HCT116 (cell line): ENCODE measurements at regions of chr9 and their contacts with region 1.

Region 1: DNA sequence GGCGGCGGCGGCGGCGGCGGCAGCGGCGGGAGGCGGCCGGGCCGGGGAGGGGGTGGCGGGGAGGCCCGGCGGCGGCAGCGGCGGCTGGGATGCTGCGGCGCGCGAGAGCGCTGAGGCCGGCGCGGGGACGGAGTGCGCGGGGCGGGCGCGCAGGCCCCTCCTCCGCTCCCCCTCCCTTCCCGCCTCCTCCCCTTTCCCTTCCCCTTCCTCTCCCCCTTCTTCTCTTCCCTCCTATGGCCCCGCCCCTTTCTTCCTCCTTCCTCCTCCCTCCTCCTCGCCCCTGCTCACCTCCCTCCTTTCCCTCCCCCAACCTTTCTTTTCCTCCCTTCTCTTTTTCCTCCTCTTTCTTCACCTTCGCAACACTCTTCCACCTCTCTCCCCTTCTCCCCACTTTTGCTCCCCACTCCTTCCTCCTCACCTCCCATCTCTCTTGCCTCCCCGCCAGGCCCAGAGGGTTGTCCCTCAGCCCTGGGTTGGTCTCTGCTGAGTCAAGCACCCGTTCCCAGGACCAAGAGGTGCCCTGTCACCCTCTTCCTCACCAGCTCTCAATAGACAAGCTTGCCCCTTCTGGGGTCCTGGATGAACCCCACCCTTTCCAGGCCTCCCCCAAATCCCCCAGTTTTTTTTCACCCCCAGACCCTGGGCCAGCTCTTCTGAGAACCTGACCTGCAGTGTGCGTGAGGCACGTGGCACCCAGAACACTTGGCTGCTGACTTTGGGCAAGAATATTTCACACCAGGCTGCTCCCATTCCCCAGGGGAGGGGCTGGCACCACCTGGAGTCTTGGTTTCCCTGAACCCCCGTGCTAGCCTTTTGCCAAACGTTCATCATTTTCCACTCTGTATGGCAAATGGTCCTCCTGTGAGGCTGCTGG is at the start of gene SEMA4D:
- DNase-seq: peak; percentile 53
- ATAC-seq: peak; percentile 91
- H3K4me3 ChIP-seq: peak within 1 kb of the TSS; percentile 68 to 73
- H3K27ac ChIP-seq: peak within 1 kb of the TSS; percentile 61; the same call in 1 of the 2 replicates
- H3K4me1 ChIP-seq: peaks cover 12 to 15% of the 10 kb centered on the region in 2 experiments
- H3K27me3 ChIP-seq: no peaks in the 10 kb centered on the region; the same call in 1 of the 2 replicates
- CTCF ChIP-seq: no peak
- POLR2A ChIP-seq: no peak
- RAD21 ChIP-seq: no peak
- total RNA-seq, gene SEMA4D: 32.0 TPM

Region 2: DNA sequence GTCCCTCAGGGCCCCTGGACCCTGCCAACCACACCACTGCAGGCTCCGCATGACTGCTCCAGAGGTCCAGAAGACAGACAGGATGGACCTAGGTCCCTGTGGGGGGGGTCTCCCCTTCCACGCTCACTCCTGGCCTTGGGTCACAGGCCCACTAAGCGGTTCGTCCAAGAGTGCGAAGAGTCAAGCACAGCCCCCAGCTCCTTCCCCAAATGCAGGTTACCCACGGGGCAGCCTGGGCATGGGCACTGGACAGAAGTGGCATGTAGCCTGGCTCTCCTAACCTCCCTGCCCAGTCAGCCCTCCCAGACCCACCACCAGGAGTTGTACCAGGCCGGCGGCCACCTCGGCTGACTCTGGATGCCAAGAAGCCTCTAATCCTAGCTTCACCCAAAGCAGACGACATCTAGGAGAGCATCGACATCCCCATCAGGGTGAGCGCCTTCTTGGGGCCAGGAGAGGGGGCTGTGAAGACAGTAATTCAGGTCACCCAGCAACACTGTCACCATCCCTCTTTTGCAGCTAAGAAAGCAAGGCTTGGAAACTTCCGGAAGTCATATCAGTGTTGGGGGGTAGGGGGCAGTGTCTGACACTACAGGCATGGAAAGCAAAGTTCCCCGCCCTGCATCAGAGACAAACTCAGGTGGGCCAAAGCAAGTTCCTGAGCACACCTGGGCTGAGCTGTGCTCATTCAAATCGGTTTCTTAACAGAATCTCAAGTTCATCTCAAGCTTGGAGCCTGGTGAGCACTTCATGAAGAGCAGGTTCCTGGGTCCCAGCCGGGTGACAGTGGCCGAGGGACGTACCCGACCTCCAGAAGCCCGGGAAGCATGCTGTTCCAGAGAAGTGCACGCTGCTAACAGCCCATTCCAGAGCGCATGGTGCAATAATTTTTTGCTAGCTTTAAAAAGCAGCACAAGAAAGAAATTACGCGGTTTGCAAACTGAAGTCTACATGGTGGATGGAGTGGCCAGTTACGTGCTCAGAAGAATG is 69.0 kb before region 1 on chr9:
- CTCF ChIA-PET with region 1: no interaction called
- POLR2A ChIA-PET with region 1: no interaction called
- RAD21 ChIA-PET with region 1: no interaction called
- intact Hi-C with region 1: loop called (anchors 5 kb)
- DNase-seq: no peak
- ATAC-seq: no peak
- H3K4me3 ChIP-seq: no peak overlapping the region
- H3K27ac ChIP-seq: no peak overlapping the region
- H3K4me1 ChIP-seq: peaks cover 15 to 59% of the 10 kb centered on the region in 2 experiments
- H3K27me3 ChIP-seq: no peaks in the 10 kb centered on the region
- CTCF ChIP-seq: peak; percentile 21 to 49 (median 45); a peak in 5 of 6 replicates
- POLR2A ChIP-seq: no peak
- RAD21 ChIP-seq: peak; percentile 30; the same call in 1 of the 2 replicates

Region 3: DNA sequence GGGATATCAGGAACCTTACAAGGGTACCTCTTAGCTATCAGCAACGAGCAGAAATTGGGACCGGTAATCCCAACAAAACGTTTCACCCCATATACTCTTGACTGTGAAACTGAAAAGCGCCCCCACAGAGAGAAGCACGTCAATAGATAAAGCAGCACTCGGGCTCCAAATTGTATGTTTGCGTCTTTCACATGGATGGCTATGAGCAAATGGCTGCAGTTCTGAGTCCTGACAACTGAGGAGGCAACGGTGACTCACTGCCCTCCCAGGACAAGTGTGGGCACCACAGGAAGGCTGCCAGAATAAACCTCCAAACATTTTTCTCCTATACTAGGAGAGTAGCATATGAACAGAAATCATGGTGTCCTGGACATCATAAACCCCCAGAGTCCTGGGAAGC is 37.0 kb before region 1 on chr9:
- CTCF ChIA-PET with region 1: no interaction called
- POLR2A ChIA-PET with region 1: no interaction called
- RAD21 ChIA-PET with region 1: no interaction called
- intact Hi-C with region 1: no loop called
- DNase-seq: no peak
- ATAC-seq: no peak
- H3K4me3 ChIP-seq: no peak overlapping the region
- H3K27ac ChIP-seq: no peak overlapping the region
- H3K4me1 ChIP-seq: peaks cover 0 to 13% of the 10 kb centered on the region in 2 experiments; a peak in 1 of 4 replicates
- H3K27me3 ChIP-seq: no peaks in the 10 kb centered on the region
- CTCF ChIP-seq: no peak
- POLR2A ChIP-seq: no peak
- RAD21 ChIP-seq: no peak

Region 4: DNA sequence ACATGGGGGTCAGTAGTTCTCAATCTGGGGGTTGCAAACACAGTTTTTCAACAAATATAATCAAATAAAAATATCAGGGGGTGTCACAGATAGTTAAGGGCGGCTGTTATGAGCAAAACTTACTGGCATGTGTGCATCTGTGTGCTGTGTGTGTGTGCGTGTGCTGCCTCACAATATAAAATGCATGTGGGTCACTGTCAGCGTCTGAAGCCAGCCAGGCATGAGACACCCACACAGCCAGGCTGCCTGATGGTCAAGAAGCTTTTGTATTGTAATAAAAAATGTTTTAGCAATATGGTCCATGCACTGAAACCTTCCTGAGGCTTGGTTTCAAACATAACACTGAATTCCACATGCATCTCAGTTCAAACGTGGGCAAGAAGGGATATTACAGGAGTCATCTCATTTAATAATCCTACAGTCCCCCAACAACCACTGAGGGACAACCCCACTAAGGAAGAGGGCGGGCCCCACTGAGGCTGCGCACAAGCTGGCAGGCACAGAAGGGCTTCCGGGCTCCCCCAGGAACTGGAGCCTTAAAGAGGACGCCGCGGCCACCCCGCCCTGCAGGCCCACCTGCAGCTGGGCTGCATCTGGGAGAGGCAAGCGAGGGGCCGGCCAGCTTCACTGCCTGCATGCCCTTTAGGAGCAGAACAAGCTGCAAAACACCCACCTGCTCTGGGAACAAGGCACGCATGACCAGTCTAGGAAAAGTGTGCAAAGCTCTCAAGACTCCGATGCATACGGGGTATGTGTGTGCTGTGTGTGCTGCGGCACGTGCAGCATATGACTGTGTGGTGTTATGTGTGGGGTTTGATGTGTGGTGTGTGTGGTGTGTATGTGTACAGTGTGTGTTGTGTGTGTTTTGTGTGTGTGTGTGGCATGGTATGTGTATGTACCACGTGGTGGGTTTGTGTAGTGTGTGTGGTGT is 14.4 kb before region 1 on chr9:
- CTCF ChIA-PET with region 1: no interaction called
- POLR2A ChIA-PET with region 1: no interaction called
- RAD21 ChIA-PET with region 1: no interaction called
- intact Hi-C with region 1: no loop called
- DNase-seq: no peak
- ATAC-seq: no peak
- H3K4me3 ChIP-seq: no peak overlapping the region
- H3K27ac ChIP-seq: no peak overlapping the region
- H3K4me1 ChIP-seq: no peaks in the 10 kb centered on the region
- H3K27me3 ChIP-seq: no peaks in the 10 kb centered on the region
- CTCF ChIP-seq: no peak
- POLR2A ChIP-seq: no peak
- RAD21 ChIP-seq: no peak